B cell (primary cell): ENCODE measurements at regions of chr1 and their contacts with region 1.

Region 1: GRCh38 chr1:110460253-110461220 is 9.6 kb downstream of the PROK1 start:
- DNase-seq: peak; percentile 87
- ATAC-seq: peak; percentile 99
- H3K4me3 ChIP-seq: no peak overlapping the region
- H3K4me3 Mint-ChIP-seq: no peak overlapping the region
- H3K27ac ChIP-seq: no peak overlapping the region
- H3K27ac Mint-ChIP-seq: no peak overlapping the region
- H3K4me1 ChIP-seq: peaks cover 0 to 2% of the 10 kb centered on the region in 2 donors
- H3K4me1 Mint-ChIP-seq: no peaks in the 10 kb centered on the region
- H3K27me3 ChIP-seq: peaks cover 0 to 3% (median 0%) of the 10 kb centered on the region in 4 experiments
- H3K27me3 Mint-ChIP-seq: peaks cover 4% of the 10 kb centered on the region
- CTCF ChIP-seq: peak; percentile 97

Region 2: GRCh38 chr1:109923131-109923945 is 537.2 kb before region 1 on chr1:
- CTCF ChIA-PET with region 1: no interaction called
- POLR2A ChIA-PET with region 1: no interaction called
- intact Hi-C with region 1: no loop called
- DNase-seq: no peak
- ATAC-seq: no peak
- H3K4me3 ChIP-seq: no peak overlapping the region
- H3K4me3 Mint-ChIP-seq: no peak overlapping the region
- H3K27ac ChIP-seq: no peak overlapping the region
- H3K27ac Mint-ChIP-seq: no peak overlapping the region
- H3K4me1 ChIP-seq: no peaks in the 10 kb centered on the region
- H3K4me1 Mint-ChIP-seq: no peaks in the 10 kb centered on the region
- H3K27me3 ChIP-seq: no peaks in the 10 kb centered on the region
- H3K27me3 Mint-ChIP-seq: peaks cover 3% of the 10 kb centered on the region
- CTCF ChIP-seq: no peak

Region 3: GRCh38 chr1:110190282-110190929 is 270.1 kb before region 1 on chr1:
- CTCF ChIA-PET with region 1: interaction called, 12 read pairs
- POLR2A ChIA-PET with region 1: no interaction called
- intact Hi-C with region 1: no loop called
- DNase-seq: no peak
- ATAC-seq: no peak
- H3K4me3 ChIP-seq: no peak overlapping the region
- H3K4me3 Mint-ChIP-seq: no peak overlapping the region
- H3K27ac ChIP-seq: no peak overlapping the region
- H3K27ac Mint-ChIP-seq: no peak overlapping the region
- H3K4me1 ChIP-seq: no peaks in the 10 kb centered on the region
- H3K4me1 Mint-ChIP-seq: no peaks in the 10 kb centered on the region
- H3K27me3 ChIP-seq: peaks cover 0 to 8% (median 2%) of the 10 kb centered on the region in 4 experiments
- H3K27me3 Mint-ChIP-seq: peaks cover 40% of the 10 kb centered on the region
- CTCF ChIP-seq: no peak

Region 4: DNA sequence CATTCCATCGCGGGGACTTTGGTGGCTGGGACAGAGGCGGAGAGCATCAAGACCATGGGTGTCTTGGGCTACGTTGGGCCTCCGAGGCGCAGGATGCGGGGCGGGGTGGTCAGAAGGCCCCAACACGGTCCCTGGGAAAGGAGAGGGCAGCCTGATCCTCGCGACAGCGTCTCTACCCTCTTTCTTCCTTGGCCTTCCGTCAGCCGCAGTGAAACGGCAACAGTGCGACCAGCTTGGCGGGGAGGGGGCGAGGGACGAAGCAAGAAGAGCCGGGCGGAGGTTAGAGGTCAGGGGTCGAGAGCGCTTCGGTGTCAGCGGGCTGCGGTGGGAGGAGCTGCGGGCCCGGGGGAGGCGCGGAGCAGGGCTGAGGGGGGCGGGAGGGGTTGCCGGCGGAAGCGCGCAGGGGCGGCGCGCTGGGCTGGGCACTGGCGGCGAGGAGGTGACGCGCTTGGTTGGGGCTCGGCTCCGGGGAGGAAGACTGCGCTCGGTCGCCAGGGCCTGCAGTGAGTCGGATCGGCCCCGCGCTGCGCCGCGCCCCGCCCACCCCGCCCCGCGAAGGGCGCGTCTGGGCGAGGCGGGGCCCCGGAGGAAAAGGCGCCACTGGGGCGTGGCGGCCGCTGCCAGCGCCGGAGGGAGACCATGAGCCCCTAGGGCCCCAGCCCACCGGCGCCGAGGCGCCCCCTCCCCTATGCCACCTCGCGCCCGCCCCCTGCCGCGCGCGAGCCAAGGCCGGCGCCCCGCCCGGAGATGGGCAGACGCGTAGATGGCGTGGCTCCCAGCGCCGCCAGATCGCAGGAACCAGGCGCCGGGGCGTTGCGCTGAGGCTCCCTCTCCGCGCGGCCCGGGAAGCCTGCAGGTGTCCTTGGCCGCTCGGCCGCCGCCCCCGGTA is 250.6 kb before region 1 on chr1 and contains the start of gene KCNC4:
- CTCF ChIA-PET with region 1: interaction called, 837 read pairs
- POLR2A ChIA-PET with region 1: interaction called, 7 read pairs
- intact Hi-C with region 1: loop called (anchors 1 kb)
- DNase-seq: peak; percentile 96
- ATAC-seq: peak; percentile 85
- H3K4me3 ChIP-seq: peak within 1 kb of the TSS; percentile 34 to 75 (median 66)
- H3K4me3 Mint-ChIP-seq: peak within 1 kb of the TSS; percentile 95
- H3K27ac ChIP-seq: peak within 1 kb of the TSS; percentile 76 to 83
- H3K27ac Mint-ChIP-seq: peak within 1 kb of the TSS; percentile 96
- H3K4me1 ChIP-seq: peaks cover 17 to 31% of the 10 kb centered on the region in 2 donors
- H3K4me1 Mint-ChIP-seq: peaks cover 43% of the 10 kb centered on the region
- H3K27me3 ChIP-seq: peaks cover 0 to 8% (median 0%) of the 10 kb centered on the region in 4 experiments
- H3K27me3 Mint-ChIP-seq: no peaks in the 10 kb centered on the region
- CTCF ChIP-seq: no peak
- total RNA-seq, gene KCNC4: 24.1 and 24.3 TPM in 2 replicates

Region 5: DNA sequence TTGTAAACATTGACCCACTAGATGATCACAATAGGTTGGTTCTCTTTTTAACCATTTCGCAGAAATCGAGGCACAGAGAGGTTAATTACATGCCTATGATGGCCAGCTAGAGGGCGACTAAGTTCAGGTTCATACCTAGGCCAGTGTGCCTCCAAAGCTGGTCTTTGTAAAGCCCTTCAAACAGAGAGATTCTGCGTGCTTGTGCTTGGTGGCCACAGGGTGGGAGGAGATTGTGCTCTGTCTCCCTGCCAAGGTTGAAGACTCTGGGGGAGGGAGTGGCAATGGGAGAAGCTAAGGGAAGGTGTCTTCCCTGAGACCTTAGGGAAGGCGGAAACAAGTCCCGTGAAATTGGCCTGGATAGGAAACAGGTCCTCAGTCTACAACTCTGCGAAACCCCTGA is 180.4 kb before region 1 on chr1:
- CTCF ChIA-PET with region 1: no interaction called
- POLR2A ChIA-PET with region 1: no interaction called
- intact Hi-C with region 1: no loop called
- DNase-seq: no peak
- ATAC-seq: no peak
- H3K4me3 ChIP-seq: no peak overlapping the region
- H3K4me3 Mint-ChIP-seq: no peak overlapping the region
- H3K27ac ChIP-seq: no peak overlapping the region
- H3K27ac Mint-ChIP-seq: no peak overlapping the region
- H3K4me1 ChIP-seq: no peaks in the 10 kb centered on the region
- H3K4me1 Mint-ChIP-seq: no peaks in the 10 kb centered on the region
- H3K27me3 ChIP-seq: no peaks in the 10 kb centered on the region
- H3K27me3 Mint-ChIP-seq: no peaks in the 10 kb centered on the region
- CTCF ChIP-seq: no peak

Region 6: GRCh38 chr1:110312188-110313121 is 148.1 kb before region 1 on chr1:
- CTCF ChIA-PET with region 1: interaction called, 82 read pairs
- POLR2A ChIA-PET with region 1: no interaction called
- intact Hi-C with region 1: loop called (anchors 1 kb)
- DNase-seq: peak; percentile 81
- ATAC-seq: peak; percentile 95
- H3K4me3 ChIP-seq: no peak overlapping the region
- H3K4me3 Mint-ChIP-seq: no peak overlapping the region
- H3K27ac ChIP-seq: no peak overlapping the region
- H3K27ac Mint-ChIP-seq: no peak overlapping the region
- H3K4me1 ChIP-seq: peaks cover 0 to 4% of the 10 kb centered on the region in 2 donors
- H3K4me1 Mint-ChIP-seq: no peaks in the 10 kb centered on the region
- H3K27me3 ChIP-seq: no peaks in the 10 kb centered on the region
- H3K27me3 Mint-ChIP-seq: no peaks in the 10 kb centered on the region
- CTCF ChIP-seq: peak; percentile 89

Region 7: GRCh38 chr1:110384581-110385321 is 75.8 kb before region 1 on chr1:
- CTCF ChIA-PET with region 1: interaction called, 25 read pairs
- POLR2A ChIA-PET with region 1: interaction called, 3 read pairs
- intact Hi-C with region 1: loop called (anchors 2 kb)
- DNase-seq: peak; percentile 91
- ATAC-seq: peak; percentile 77
- H3K4me3 ChIP-seq: peak overlapping the region; percentile 34 to 49 (median 42)
- H3K4me3 Mint-ChIP-seq: peak overlapping the region; percentile 78
- H3K27ac ChIP-seq: peak overlapping the region; percentile 87 to 98
- H3K27ac Mint-ChIP-seq: peak overlapping the region; percentile 90
- H3K4me1 ChIP-seq: peaks cover 61 to 79% of the 10 kb centered on the region in 2 donors
- H3K4me1 Mint-ChIP-seq: peaks cover 76% of the 10 kb centered on the region
- H3K27me3 ChIP-seq: no peaks in the 10 kb centered on the region
- H3K27me3 Mint-ChIP-seq: no peaks in the 10 kb centered on the region
- CTCF ChIP-seq: no peak

Region 8: GRCh38 chr1:110430366-110430765 is 30.2 kb before region 1 on chr1:
- CTCF ChIA-PET with region 1: interaction called, 21 read pairs
- POLR2A ChIA-PET with region 1: no interaction called
- intact Hi-C with region 1: no loop called
- DNase-seq: no peak
- ATAC-seq: no peak
- H3K4me3 ChIP-seq: no peak overlapping the region
- H3K4me3 Mint-ChIP-seq: no peak overlapping the region
- H3K27ac ChIP-seq: no peak overlapping the region
- H3K27ac Mint-ChIP-seq: no peak overlapping the region
- H3K4me1 ChIP-seq: no peaks in the 10 kb centered on the region
- H3K4me1 Mint-ChIP-seq: no peaks in the 10 kb centered on the region
- H3K27me3 ChIP-seq: peaks cover 0 to 5% (median 3%) of the 10 kb centered on the region in 4 experiments
- H3K27me3 Mint-ChIP-seq: peaks cover 19% of the 10 kb centered on the region
- CTCF ChIP-seq: no peak

Region 9: GRCh38 chr1:110495926-110496600 is 35.5 kb after region 1 on chr1:
- CTCF ChIA-PET with region 1: interaction called, 62 read pairs
- POLR2A ChIA-PET with region 1: interaction called, 12 read pairs
- intact Hi-C with region 1: no loop called
- DNase-seq: peak; percentile 84
- ATAC-seq: peak; percentile 84
- H3K4me3 ChIP-seq: no peak overlapping the region
- H3K4me3 Mint-ChIP-seq: no peak overlapping the region
- H3K27ac ChIP-seq: no peak overlapping the region
- H3K27ac Mint-ChIP-seq: no peak overlapping the region
- H3K4me1 ChIP-seq: no peaks in the 10 kb centered on the region
- H3K4me1 Mint-ChIP-seq: no peaks in the 10 kb centered on the region
- H3K27me3 ChIP-seq: no peaks in the 10 kb centered on the region
- H3K27me3 Mint-ChIP-seq: no peaks in the 10 kb centered on the region
- CTCF ChIP-seq: peak; percentile 98

Region 10: DNA sequence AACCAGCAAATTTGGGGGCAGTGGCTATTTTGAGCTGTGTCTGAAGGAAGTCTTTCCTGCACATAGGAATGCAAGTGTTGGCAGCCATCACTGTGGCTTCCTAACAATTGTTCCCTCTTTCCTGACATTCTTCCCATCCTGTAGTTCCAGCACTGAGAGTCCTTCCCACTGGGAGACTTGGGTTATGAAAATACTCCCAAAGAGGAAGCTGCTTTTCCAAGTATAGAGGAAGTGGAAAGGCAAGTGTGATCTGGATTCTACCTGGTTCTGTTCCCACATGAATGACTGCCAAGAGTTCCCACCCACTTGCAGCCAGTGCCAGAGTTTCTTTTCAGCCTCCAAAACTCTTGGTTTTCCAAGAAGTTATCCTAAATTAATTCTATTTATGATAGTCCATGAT is 313.9 kb after region 1 on chr1:
- CTCF ChIA-PET with region 1: no interaction called
- POLR2A ChIA-PET with region 1: no interaction called
- intact Hi-C with region 1: no loop called
- DNase-seq: no peak
- ATAC-seq: no peak
- H3K4me3 ChIP-seq: no peak overlapping the region
- H3K4me3 Mint-ChIP-seq: no peak overlapping the region
- H3K27ac ChIP-seq: no peak overlapping the region
- H3K27ac Mint-ChIP-seq: no peak overlapping the region
- H3K4me1 ChIP-seq: peaks cover 5 to 8% of the 10 kb centered on the region in 2 donors
- H3K4me1 Mint-ChIP-seq: peaks cover 9% of the 10 kb centered on the region
- H3K27me3 ChIP-seq: peaks cover 0 to 3% (median 0%) of the 10 kb centered on the region in 4 experiments
- H3K27me3 Mint-ChIP-seq: peaks cover 12% of the 10 kb centered on the region
- CTCF ChIP-seq: no peak